ENCODE measurements at regions of chr16 and their contacts with region 1.

Region 1: GRCh38 chr16:28181515-28181914 is 30.2 kb downstream of the XPO6 start:
- DNase-seq: peak; percentile 29
- H3K4me3 Mint-ChIP-seq: peak overlapping the region; percentile 21
- H3K27ac Mint-ChIP-seq: peak overlapping the region; percentile 87
- H3K4me1 Mint-ChIP-seq: peaks cover 80% of the 10 kb centered on the region
- H3K27me3 Mint-ChIP-seq: no peaks in the 10 kb centered on the region

Region 2: DNA sequence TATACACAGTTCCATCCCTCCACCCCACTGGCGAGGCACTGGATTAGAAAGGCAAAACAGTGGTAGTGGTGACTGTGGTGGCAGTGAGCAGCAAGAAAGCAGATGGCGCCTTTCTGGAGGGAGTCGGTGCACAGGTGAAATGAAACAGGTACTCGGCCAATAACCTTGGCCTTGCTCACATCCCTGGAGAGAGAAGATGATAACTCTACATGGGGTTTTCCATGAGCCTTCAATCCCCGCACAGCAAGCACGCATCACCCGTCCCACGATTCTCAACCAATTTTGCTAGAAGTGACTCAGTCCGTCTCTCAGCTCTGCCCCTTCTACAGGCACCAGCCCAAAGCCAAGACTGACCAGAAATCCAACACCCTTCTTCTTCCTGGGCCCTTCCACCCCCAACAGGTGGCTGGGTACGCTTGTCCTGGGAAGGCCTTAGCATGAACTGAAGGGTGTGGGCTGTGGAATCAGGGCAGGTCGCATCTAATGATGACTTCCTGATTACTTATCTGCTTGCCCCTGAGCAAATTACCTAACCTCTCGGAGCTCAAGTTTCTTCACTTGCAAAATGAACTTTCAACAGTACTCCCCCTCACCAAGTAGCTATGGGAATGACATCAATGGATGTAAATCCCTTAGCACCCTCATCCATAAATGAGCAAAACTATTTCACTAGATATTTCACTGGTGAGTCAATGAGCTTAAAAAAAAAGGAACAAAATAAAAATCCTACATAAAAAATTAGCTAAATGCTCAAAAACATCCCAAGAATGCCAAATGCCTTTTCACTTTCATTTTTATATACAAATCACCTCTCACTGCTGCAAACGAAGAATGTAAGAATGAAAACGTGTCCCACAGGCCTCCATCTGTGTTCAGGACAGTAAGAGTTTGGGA is 12.3 kb after region 1 on chr16:
- CTCF ChIA-PET with region 1: interaction called, 3 read pairs
- POLR2A ChIA-PET with region 1: interaction called, 6 read pairs
- intact Hi-C with region 1: loop called (anchors 2 kb)
- DNase-seq: peak; percentile 75
- H3K4me3 Mint-ChIP-seq: peak overlapping the region; percentile 75
- H3K27ac Mint-ChIP-seq: peak overlapping the region; percentile 98
- H3K4me1 Mint-ChIP-seq: peaks cover 85% of the 10 kb centered on the region
- H3K27me3 Mint-ChIP-seq: no peaks in the 10 kb centered on the region